ENCODE measurements at regions of chr2 and their contacts with region 1.

Region 1: GRCh38 chr2:230160112-230160660 is 59.6 kb downstream of the SP110 start:
- DNase-seq: no peak
- H3K4me3 ChIP-seq: no peak overlapping the region
- H3K27ac ChIP-seq: no peak overlapping the region
- H3K4me1 ChIP-seq: peaks cover 0 to 6% (median 2%) of the 10 kb centered on the region in 4 donors
- H3K27me3 ChIP-seq: no peaks in the 10 kb centered on the region
- CTCF ChIP-seq: peak; percentile 59 to 74 (median 71)
- EP300 ChIP-seq: no peak
- POLR2A ChIP-seq: no peak

Region 2: DNA sequence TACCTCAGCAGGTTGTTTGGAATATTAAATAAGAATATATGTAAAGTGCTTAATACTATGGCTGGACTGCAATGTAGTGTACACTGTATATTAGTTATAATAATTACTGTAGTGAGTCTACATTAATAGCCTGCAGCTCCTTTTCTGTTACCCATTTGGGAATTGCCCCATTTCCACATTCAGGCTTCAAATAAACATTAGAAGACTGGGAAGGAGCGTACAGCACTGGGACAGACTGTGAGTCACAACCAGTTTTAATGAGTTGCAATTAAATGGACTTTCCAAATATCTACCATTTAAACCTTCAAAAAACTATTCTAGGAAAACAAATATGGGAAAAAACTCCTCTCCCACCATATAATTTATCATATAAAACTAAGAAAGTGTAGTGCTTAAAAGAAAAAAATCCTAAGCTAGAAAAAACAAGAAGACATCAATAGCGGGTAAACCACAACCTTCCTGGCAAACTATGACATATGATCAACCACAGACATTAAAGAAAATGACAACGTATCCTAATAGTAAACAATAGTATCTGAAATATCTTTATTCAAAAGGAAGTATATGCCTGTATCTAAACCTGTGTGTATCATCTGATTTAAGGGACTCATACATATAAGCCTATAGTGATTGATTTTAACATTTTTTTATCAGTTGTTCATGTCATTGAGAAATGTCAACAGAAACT is 324.4 kb before region 1 on chr2:
- intact Hi-C with region 1: no loop called
- DNase-seq: no peak
- H3K4me3 ChIP-seq: no peak overlapping the region
- H3K27ac ChIP-seq: no peak overlapping the region
- H3K4me1 ChIP-seq: peaks cover 0 to 26% (median 10%) of the 10 kb centered on the region in 4 donors
- H3K27me3 ChIP-seq: no peaks in the 10 kb centered on the region
- CTCF ChIP-seq: no peak
- EP300 ChIP-seq: no peak
- POLR2A ChIP-seq: no peak

Region 3: DNA sequence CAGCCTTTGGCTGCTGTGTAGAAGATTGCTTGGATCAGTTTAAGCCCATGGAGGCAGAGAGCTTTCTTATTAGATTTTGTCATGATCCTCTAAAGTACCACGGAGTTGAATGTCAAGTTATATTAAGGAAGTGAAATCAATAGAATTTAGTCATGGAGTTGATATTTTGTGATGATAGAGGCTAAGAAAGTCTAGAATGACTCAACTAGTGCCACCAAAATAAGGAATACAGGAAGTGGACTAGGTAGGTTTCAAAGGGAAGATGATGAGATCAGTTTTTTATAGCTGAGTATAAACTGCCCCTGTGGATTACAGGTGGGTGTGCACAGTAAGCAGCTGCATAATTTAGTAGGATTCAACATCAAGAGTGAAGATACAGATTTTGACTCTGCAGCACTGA is 212.6 kb before region 1 on chr2:
- intact Hi-C with region 1: no loop called
- DNase-seq: no peak
- H3K4me3 ChIP-seq: no peak overlapping the region
- H3K27ac ChIP-seq: no peak overlapping the region
- H3K4me1 ChIP-seq: peaks cover 0 to 12% (median 10%) of the 10 kb centered on the region in 4 donors
- H3K27me3 ChIP-seq: no peaks in the 10 kb centered on the region
- CTCF ChIP-seq: no peak
- EP300 ChIP-seq: no peak
- POLR2A ChIP-seq: no peak

Region 4: GRCh38 chr2:229996320-229996719 is 163.9 kb before region 1 on chr2:
- intact Hi-C with region 1: no loop called
- DNase-seq: peak; percentile 26
- H3K4me3 ChIP-seq: no peak overlapping the region
- H3K27ac ChIP-seq: no peak overlapping the region
- H3K4me1 ChIP-seq: no peaks in the 10 kb centered on the region
- H3K27me3 ChIP-seq: no peaks in the 10 kb centered on the region
- CTCF ChIP-seq: no peak
- EP300 ChIP-seq: no peak
- POLR2A ChIP-seq: no peak

Region 5: DNA sequence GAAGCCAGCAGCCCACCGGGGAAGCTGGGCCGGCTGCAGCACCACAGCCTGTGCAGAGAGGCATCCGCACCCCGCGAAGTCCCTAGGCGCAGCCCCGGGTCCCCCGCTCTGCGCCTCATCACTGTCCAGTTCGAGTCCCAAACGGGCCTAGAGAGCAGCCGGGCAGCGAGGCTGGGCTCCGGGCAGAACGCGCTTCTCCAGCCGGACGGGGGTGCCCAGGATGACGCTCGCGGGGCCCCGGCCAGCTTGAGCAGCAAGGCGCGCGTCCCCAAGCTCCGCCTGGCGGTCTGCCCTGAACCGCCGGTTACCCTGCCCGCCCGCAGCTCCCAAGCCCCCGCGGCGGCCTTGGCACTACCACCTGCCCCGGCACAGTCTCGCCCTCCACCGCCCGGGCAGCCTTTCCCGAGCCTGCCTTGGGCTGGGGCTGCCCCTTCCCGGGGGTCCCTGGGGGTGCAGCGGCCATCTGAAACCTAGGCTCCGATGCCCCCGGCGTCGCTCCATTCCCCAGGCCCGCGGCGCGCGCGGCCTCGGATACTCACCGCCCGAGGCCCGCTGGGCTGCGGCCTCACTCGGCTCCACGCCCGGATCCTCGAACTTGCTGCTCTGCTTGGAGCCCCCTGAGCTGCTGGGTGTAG is 92.1 kb before region 1 on chr2:
- intact Hi-C with region 1: loop called (anchors 5 kb)
- DNase-seq: no peak
- H3K4me3 ChIP-seq: peak overlapping the region; percentile 64 to 82 (median 75)
- H3K27ac ChIP-seq: peak overlapping the region; percentile 52 to 78 (median 70)
- H3K4me1 ChIP-seq: peaks cover 8 to 28% (median 19%) of the 10 kb centered on the region in 4 donors
- H3K27me3 ChIP-seq: no peaks in the 10 kb centered on the region
- CTCF ChIP-seq: peak in 1 of 3 experiments; percentile 22
- EP300 ChIP-seq: no peak
- POLR2A ChIP-seq: no peak

Region 6: GRCh38 chr2:230202430-230203109 is 42.4 kb after region 1 on chr2:
- intact Hi-C with region 1: no loop called
- DNase-seq: no peak
- H3K4me3 ChIP-seq: no peak overlapping the region
- H3K27ac ChIP-seq: no peak overlapping the region
- H3K4me1 ChIP-seq: no peaks in the 10 kb centered on the region
- H3K27me3 ChIP-seq: no peaks in the 10 kb centered on the region
- CTCF ChIP-seq: no peak
- EP300 ChIP-seq: no peak
- POLR2A ChIP-seq: no peak

Measured in esophagus muscularis mucosa (tissue), 4 donors.